ENCODE measurements at regions of chr3 and their contacts with region 1.

Region 1: DNA sequence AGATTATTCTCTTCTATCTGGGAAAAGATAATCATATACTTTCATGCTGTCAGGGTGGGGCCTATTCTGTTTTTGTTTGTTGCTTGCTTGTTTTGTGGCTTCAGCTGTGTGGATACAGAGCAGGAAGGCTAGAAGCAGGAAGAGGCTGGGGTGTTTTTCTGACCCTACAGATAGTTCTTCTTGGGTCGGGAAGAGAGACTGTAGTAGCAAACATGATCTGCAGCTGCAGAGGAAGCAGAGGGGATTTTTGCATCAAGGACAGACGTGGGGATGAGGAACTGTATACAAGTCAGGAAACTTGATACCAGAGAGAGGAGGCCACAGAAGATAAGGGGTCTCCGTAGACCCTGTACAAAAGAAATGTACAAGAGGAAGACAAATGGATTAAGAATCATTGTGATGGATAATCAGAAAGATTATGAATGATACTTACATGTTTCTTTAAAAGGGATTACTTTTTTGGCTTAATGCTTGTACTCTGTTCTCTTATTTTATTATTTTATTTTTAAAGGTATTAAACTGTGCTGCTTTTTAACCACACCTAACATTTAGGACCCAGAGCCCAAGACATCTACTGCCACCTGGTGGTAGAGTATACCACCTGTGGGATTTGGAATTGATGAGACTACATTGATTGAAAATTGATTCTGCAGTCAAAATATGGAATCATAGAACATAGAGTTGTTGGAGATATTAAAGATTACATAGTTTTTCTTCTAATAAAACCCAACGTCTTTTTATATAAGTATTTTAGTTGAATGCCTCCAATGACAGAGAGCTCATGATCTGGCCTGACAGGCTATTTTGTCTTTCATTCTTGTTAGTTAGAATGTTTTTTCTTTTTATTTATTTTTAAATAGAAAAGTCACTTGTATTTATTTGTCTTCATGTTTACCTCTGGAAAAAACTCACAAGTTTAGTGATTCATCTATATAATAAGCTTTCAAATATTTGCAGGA is 87.3 kb upstream of the ROPN1 start:
- DNase-seq: no peak
- H3K4me3 ChIP-seq: no peak overlapping the region
- CTCF ChIP-seq: peak; percentile 52

Region 2: GRCh38 chr3:123941121-123941520 is 138.1 kb before region 1 on chr3:
- CTCF ChIA-PET with region 1: interaction called, 11 read pairs
- POLR2A ChIA-PET with region 1: no interaction called
- DNase-seq: no peak
- H3K4me3 ChIP-seq: no peak overlapping the region
- CTCF ChIP-seq: no peak

Region 3: DNA sequence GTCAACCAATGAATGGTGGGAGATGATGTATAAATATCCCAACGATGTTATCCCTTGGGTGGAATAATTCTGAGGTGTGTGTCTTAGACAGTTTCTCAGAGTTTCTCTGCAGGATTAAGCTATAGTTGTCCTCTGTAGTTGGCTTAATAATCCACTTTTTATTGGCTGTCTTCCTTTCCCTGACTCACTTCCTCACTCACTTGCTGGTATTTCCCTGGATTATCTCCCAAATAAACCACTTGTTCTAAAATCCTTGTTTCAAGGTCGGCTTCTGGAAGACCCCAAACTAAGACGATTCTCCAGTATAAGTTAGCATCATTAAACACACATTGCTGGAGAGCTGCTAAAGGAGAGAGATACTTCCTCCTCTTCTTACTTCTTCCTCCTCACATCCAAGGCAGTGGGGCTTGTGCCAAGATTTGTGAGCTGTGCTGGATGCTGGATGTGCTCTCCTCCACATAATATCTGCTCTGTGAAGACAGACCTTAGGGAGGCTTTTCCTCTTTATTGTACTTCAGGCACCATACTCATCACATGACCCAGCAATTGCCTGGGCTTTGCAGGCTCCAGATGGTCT is 64.8 kb before region 1 on chr3:
- CTCF ChIA-PET with region 1: interaction called, 42 read pairs
- POLR2A ChIA-PET with region 1: no interaction called
- DNase-seq: no peak
- H3K4me3 ChIP-seq: no peak overlapping the region
- CTCF ChIP-seq: no peak

Region 4: GRCh38 chr3:124032648-124033359 is 46.4 kb before region 1 on chr3:
- CTCF ChIA-PET with region 1: interaction called, 28 read pairs
- POLR2A ChIA-PET with region 1: no interaction called
- DNase-seq: peak; percentile 17
- H3K4me3 ChIP-seq: peak overlapping the region; percentile 90
- CTCF ChIP-seq: peak; percentile 93

Region 5: DNA sequence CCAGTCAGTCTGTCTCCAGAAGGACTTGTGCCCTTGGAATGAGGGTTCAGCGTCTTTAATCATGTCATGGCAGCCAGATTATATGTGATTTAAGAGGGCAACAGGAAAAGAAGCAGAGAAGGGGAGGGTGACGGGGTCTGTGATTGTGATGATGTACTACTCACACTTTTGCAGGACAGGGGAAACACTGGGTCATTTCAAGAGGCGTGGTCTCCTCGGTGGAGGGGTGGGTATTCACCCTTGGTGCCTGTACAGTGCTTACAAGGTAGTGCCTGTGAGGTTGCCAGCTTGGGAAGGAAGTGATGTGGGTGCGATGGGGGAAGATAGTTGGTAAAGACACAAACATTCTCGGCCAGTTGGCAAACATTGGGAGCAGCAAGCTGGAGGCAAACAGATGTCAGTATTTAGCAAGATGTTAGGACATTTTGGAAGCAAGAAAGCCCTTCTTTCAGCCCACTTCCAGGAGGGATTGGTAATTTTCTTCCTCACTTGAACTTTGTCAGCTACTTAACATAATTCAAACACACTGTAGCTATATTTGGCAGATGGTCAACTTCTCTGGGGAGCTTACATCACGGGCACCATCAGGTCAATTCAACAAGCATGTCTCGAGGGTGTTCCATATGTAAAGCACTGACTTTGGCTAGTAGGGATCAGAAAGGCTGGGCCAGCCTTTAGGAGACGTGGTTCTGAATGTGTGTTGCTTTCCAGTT is 15.9 kb before region 1 on chr3:
- CTCF ChIA-PET with region 1: interaction called, 63 read pairs
- POLR2A ChIA-PET with region 1: no interaction called
- DNase-seq: peak; percentile 40
- H3K4me3 ChIP-seq: no peak overlapping the region
- CTCF ChIP-seq: no peak

Region 6: DNA sequence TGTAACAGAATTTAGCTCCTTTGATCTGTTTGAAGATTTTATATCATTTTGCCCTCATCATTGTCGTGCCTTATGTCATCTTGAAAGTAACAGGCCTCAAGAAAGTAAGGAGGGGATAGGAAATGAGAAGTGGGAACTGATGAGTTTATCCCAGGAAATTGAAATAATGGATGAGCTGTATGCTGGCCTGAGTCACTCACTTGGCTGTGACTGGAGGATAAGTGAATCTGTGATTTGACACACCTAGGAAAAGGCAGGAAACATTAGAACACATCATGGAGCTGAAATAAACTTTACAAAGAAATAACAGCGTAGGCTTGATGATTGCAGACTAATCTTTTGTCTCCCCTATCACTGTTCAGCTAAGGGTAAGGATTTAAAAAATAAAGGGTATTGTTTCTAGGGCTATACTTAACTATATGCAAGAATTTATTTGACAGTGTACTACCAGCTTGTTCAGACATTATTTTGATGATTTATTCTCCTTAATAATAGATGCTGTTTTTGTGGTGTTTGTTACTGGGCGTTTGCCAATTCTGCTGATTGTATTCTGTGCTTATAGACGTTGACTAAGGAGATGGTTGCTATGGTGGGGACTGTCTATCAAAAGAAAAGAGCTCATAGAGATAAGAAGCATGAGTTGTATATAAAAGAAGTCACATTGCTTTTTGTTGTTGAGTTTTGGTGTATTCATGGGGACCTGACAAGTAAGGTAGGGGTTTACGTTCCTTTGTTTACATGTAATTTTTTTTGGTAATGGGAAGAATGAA is 18.3 kb after region 1 on chr3:
- CTCF ChIA-PET with region 1: interaction called, 86 read pairs
- POLR2A ChIA-PET with region 1: no interaction called
- DNase-seq: no peak
- H3K4me3 ChIP-seq: no peak overlapping the region
- CTCF ChIP-seq: no peak

Region 7: GRCh38 chr3:124107104-124107890 is 28.1 kb after region 1 on chr3:
- CTCF ChIA-PET with region 1: interaction called, 10 read pairs
- POLR2A ChIA-PET with region 1: interaction called, 5 read pairs
- DNase-seq: no peak
- H3K4me3 ChIP-seq: no peak overlapping the region
- CTCF ChIP-seq: no peak

Region 8: GRCh38 chr3:124373524-124373923 is 294.3 kb after region 1 on chr3:
- CTCF ChIA-PET with region 1: no interaction called
- POLR2A ChIA-PET with region 1: no interaction called
- DNase-seq: no peak
- H3K4me3 ChIP-seq: no peak overlapping the region
- CTCF ChIP-seq: no peak